Motor neuron (in vitro differentiated cells): ENCODE measurements at regions of chr11 and their contacts with region 1.

Region 1: GRCh38 chr11:36564376-36565030 is 3.3 kb upstream of the RAG1 start:
- ATAC-seq: peak; percentile 61 to 96 (median 76)
- H3K4me3 ChIP-seq: peak overlapping the region in 4 of 5 donors; percentile 13 to 27 (median 20)
- H3K27ac ChIP-seq: no peak overlapping the region
- H3K4me1 ChIP-seq: no peaks in the 10 kb centered on the region

Region 2: DNA sequence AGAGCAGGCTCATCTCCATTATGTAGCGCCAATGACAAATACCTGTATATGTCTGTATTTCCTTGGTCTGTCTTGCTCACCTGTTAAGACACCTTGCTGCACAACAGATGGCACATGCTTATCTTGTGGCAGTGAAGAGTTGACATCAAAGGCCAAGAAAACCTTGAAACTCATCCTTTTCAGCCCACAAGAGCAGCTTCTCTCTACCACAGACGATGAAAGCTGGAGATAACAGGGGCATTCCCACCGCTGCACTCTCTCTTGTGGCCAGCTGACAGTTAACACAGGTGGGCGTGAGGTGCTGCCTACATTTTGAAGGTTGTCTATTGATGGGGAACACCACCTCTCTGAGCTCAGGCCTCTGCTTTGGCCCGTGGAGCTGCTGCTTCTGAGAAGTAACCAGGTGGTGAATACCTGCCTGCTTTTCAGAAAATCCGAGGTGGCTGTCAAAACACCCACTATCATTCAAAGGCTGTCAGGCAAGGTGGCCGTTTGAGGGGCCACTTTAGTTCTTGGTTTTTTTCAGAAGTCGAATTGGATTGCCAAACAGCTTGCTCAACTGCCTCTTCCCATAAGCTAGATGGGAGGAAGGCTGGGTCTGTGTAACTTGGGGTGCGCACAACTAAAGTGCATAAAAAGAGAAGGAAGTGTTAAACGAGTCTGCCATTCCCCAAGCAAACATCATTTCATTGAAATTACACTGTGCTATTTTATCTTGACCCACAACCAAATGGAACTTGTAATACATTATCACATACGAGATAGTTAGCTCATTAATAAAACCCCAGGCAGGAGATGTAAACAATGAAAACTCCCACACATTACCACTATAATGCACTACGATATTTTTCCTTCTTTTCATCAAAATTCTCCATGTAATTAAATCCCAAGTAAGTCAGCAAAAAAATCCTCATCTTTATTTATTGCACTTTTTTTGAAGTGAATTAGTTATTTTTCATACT is 120.6 kb after region 1 on chr11:
- in situ Hi-C with region 1: loop called in 1 of 9 experiments (anchors 10 kb)
- ATAC-seq: no peak
- H3K4me3 ChIP-seq: no peak overlapping the region
- H3K27ac ChIP-seq: no peak overlapping the region
- H3K4me1 ChIP-seq: no peaks in the 10 kb centered on the region

Region 3: DNA sequence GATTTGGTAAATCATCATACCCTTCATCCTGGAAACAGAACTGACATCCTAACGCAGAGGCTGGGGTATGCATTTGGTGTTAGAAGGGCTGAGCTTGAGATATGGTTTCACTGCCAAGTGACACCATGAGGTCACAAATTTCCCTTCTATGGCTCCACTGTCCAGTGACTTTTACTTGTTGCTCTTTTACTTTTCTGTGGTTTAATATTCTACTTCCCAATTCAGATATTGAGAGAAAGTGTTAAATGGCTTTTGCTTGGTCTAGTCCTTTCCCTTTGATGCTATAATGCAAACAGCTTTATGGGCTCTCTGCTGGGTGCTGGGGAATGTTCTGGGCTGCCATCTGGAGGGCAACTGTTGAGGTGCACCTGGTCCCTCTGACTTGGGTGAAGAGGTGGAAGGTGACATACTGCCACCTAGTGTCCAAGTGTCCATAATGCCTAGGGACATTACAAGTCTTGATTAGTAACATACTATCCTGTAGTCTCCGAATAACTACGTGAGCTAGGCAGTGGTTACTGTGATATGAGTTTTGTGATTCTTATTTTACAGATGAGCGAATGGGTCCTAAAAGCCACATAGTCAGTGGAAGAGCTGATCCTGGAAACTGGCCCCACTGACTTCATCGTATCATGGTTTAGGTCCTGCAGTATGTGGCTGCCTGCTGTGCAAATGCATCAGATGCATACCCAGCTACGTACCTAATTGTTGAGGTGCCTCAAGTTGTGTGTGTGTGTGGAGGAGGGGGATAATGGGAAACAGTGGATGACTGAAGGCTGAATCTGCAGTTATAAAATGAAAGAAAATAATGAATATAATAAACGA is 182.6 kb after region 1 on chr11:
- in situ Hi-C with region 1: loop called in 2 of 9 experiments (anchors 25 kb)
- ATAC-seq: peak; percentile 86 to 100 (median 98)
- H3K4me3 ChIP-seq: no peak overlapping the region
- H3K27ac ChIP-seq: no peak overlapping the region
- H3K4me1 ChIP-seq: no peaks in the 10 kb centered on the region

Region 4: DNA sequence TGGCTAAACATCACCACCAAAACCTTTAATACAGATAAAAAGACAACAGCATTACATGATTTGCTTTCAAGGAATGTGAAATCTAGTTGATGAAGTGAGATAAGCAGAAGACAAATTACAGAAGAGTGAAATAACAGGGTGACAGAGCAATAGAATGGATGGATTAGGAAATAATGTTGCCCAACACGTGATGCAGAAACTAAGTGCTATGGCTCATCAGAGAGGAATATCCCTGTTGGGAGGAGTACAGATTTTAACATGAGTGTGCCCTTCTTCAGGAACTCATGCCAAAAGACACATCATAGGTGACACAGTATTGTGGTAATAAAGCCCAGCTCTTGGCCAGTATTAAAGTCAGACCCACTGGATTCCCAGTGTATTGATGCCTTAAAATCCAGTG is 210.1 kb after region 1 on chr11:
- in situ Hi-C with region 1: loop called in 1 of 9 experiments (anchors 25 kb)
- ATAC-seq: peak in 2 of 8 experiments; percentile 87 to 88
- H3K4me3 ChIP-seq: no peak overlapping the region
- H3K27ac ChIP-seq: no peak overlapping the region
- H3K4me1 ChIP-seq: no peaks in the 10 kb centered on the region